ENCODE measurements at regions of chr11 and their contacts with region 1.

Region 1: GRCh38 chr11:126989942-126990715 is 10.4 kb downstream of the KIRREL3 start:
- DNase-seq: peak; percentile 24 to 68 (median 57)
- H3K4me3 ChIP-seq: no peak overlapping the region
- H3K27ac ChIP-seq: no peak overlapping the region
- H3K4me1 ChIP-seq: no peaks in the 10 kb centered on the region
- H3K27me3 ChIP-seq: no peaks in the 10 kb centered on the region
- CTCF ChIP-seq: peak; percentile 33 to 58 (median 42)
- EP300 ChIP-seq: no peak
- POLR2A ChIP-seq: no peak

Region 2: GRCh38 chr11:126303623-126304456 is 686.3 kb before region 1 on chr11 and contains the start of gene DCPS:
- intact Hi-C with region 1: loop called in 1 of 4 experiments (anchors 10 kb)
- DNase-seq: peak; percentile 89 to 95 (median 91)
- H3K4me3 ChIP-seq: peak within 1 kb of the TSS; percentile 48
- H3K27ac ChIP-seq: peak within 1 kb of the TSS; percentile 66 to 79
- H3K4me1 ChIP-seq: peaks cover 6% of the 10 kb centered on the region
- H3K27me3 ChIP-seq: no peaks in the 10 kb centered on the region
- CTCF ChIP-seq: no peak
- EP300 ChIP-seq: no peak
- POLR2A ChIP-seq: peak; percentile 40
- total RNA-seq, gene DCPS: 6.6 to 17.2 (median 13.5) TPM

Region 3: GRCh38 chr11:126440792-126441514 is 549.2 kb before region 1 on chr11:
- intact Hi-C with region 1: loop called in 2 of 4 experiments (anchors 5 to 10 kb)
- DNase-seq: peak; percentile 84 to 94 (median 89)
- H3K4me3 ChIP-seq: no peak overlapping the region
- H3K27ac ChIP-seq: no peak overlapping the region
- H3K4me1 ChIP-seq: peaks cover 2% of the 10 kb centered on the region
- H3K27me3 ChIP-seq: no peaks in the 10 kb centered on the region
- CTCF ChIP-seq: peak; percentile 94 to 97 (median 95)
- EP300 ChIP-seq: no peak
- POLR2A ChIP-seq: peak; percentile 12

Region 4: GRCh38 chr11:126628790-126629621 is 361.1 kb before region 1 on chr11:
- intact Hi-C with region 1: no loop called
- DNase-seq: no peak
- H3K4me3 ChIP-seq: no peak overlapping the region
- H3K27ac ChIP-seq: no peak overlapping the region
- H3K4me1 ChIP-seq: no peaks in the 10 kb centered on the region
- H3K27me3 ChIP-seq: no peaks in the 10 kb centered on the region
- CTCF ChIP-seq: no peak
- EP300 ChIP-seq: no peak
- POLR2A ChIP-seq: no peak